ENCODE measurements at regions of chr7 and their contacts with region 1.

Region 1: GRCh38 chr7:130379921-130380860 is at the start of gene CPA1:
- DNase-seq: peak; percentile 95 to 97 (median 96)
- ATAC-seq: peak; percentile 78
- H3K4me3 ChIP-seq: peak within 1 kb of the TSS in 1 of 2 donors; percentile 65
- H3K27ac ChIP-seq: peak within 1 kb of the TSS; percentile 96 to 99 (median 98)
- H3K4me1 ChIP-seq: peaks cover 80% of the 10 kb centered on the region
- H3K27me3 ChIP-seq: no peaks in the 10 kb centered on the region
- CTCF ChIP-seq: peak in 3 of 7 experiments; percentile 6 to 18 (median 13)
- POLR2A ChIP-seq: peak; percentile 95 to 98 (median 98)
- total RNA-seq, gene CPA1: 26,456 to 42,834 TPM

Region 2: DNA sequence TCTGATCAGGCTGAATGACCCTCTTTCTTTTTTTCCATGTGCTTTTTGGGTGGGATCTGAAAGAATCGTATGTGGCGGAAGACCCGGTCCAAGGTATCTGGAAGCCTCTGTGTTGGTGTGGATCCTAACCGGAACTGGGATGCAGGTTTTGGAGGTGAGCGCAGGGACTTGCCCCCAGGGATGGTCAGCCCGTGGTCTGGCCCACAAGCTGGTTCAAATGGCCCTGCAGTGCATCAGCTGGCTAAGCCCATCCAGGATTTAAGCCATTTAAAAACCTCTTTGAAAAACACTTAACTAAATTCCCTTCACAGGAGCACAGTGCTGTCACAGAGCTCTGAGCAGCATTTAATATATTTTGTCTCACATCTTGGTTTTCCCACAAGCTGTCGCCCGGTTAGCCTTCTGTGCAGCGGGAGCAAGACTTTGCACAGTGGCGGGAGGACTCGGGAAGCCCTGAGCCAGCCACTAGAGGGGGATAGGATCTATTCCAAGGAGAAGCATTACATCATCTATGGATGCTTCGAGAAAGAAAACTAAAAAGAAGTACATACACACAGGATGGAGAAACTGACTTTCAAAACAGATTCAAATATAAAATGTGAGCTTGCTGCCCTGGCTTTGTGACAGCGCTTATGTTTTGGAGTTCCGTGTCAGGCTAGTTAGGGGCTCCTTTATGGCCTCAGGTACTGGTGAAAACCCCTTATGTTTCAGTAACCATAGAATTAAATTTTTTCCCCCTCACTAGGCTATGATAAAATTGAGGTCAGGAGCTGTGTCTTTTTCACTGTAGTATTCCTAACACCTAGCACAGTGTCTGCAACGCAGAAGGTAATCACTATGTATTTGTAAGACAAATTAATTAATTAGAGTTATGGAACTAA is 102.2 kb before region 1 on chr7:
- intact Hi-C with region 1: loop called (anchors 10 kb)
- DNase-seq: peak; percentile 73 to 79 (median 76)
- ATAC-seq: peak; percentile 41
- H3K4me3 ChIP-seq: no peak overlapping the region
- H3K27ac ChIP-seq: peak overlapping the region; percentile 25 to 94 (median 66)
- H3K4me1 ChIP-seq: peaks cover 96% of the 10 kb centered on the region
- H3K27me3 ChIP-seq: no peaks in the 10 kb centered on the region
- CTCF ChIP-seq: peak; percentile 34 to 73 (median 60)
- POLR2A ChIP-seq: peak in 2 of 3 donors; percentile 52 to 54

Region 3: DNA sequence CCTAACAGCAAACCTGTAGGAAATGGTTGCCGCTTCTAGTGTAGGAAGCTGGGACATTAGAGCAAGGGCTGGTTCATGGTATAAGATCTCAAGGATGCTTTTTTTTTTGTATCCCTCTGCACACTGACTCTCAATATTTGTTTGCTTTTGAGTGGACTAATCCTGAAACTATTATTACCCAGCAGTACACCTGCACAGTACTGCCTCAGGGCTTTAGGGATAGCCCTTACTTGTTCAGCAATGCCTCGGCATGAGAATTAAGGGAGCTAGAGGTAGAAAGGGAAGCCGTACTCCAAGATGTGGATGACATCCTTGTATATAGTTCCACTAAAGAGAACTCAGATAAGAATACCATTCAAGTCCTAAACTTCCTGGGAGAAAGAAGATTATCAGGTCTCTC is 217.9 kb after region 1 on chr7:
- intact Hi-C with region 1: no loop called
- DNase-seq: no peak
- ATAC-seq: no peak
- H3K4me3 ChIP-seq: no peak overlapping the region
- H3K27ac ChIP-seq: no peak overlapping the region
- H3K4me1 ChIP-seq: no peaks in the 10 kb centered on the region
- H3K27me3 ChIP-seq: no peaks in the 10 kb centered on the region
- CTCF ChIP-seq: no peak
- POLR2A ChIP-seq: no peak

Measured in body of pancreas (tissue), 4 donors.